CD4-positive, alpha-beta T cell (primary cell): ENCODE measurements at regions of chr5 and their contacts with region 1.

Region 1: DNA sequence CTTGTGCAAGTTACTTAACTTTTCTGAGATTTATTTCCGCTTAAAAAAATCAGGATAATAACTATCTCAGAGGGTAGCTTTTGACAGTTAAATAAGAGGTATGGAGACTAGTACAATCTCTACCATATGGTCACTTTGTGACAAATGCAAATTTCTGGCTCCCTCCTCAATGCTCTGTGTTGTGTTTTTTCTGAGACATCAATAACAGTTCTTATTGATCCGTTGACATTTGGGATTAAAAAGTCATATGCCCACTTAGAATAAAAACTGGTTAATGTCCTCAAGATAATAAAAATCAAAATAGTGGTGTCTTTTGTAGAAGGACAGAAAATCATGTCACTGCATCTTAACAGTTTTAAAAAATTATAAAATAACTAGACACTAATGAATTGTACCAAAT is 24.7 kb upstream of the LNPEP start:
- DNase-seq: no peak
- ATAC-seq: no peak
- H3K4me3 ChIP-seq: no peak overlapping the region
- H3K4me3 Mint-ChIP-seq: no peak overlapping the region
- H3K27ac ChIP-seq: no peak overlapping the region
- H3K27ac Mint-ChIP-seq: no peak overlapping the region
- H3K4me1 ChIP-seq: no peaks in the 10 kb centered on the region
- H3K4me1 Mint-ChIP-seq: peaks cover 20% of the 10 kb centered on the region
- H3K27me3 ChIP-seq: no peaks in the 10 kb centered on the region
- H3K27me3 Mint-ChIP-seq: no peaks in the 10 kb centered on the region
- CTCF ChIP-seq: no peak

Region 2: GRCh38 chr5:96885518-96886338 is 25.4 kb before region 1 on chr5:
- CTCF ChIA-PET with region 1: no interaction called
- POLR2A ChIA-PET with region 1: interaction called, 3 read pairs
- intact Hi-C with region 1: loop called in 1 of 2 experiments (anchors 2 kb)
- DNase-seq: peak in 7 of 14 experiments; percentile 14 to 90 (median 45)
- ATAC-seq: peak; percentile 95
- H3K4me3 ChIP-seq: no peak overlapping the region
- H3K4me3 Mint-ChIP-seq: peak overlapping the region; percentile 59
- H3K27ac ChIP-seq: peak overlapping the region; percentile 44 to 82
- H3K27ac Mint-ChIP-seq: peak overlapping the region; percentile 94
- H3K4me1 ChIP-seq: peaks cover 55% of the 10 kb centered on the region
- H3K4me1 Mint-ChIP-seq: peaks cover 76% of the 10 kb centered on the region
- H3K27me3 ChIP-seq: no peaks in the 10 kb centered on the region
- H3K27me3 Mint-ChIP-seq: no peaks in the 10 kb centered on the region
- CTCF ChIP-seq: no peak